AG04449 (cell line): ENCODE measurements at regions of chr16 and their contacts with region 1.

Region 1: DNA sequence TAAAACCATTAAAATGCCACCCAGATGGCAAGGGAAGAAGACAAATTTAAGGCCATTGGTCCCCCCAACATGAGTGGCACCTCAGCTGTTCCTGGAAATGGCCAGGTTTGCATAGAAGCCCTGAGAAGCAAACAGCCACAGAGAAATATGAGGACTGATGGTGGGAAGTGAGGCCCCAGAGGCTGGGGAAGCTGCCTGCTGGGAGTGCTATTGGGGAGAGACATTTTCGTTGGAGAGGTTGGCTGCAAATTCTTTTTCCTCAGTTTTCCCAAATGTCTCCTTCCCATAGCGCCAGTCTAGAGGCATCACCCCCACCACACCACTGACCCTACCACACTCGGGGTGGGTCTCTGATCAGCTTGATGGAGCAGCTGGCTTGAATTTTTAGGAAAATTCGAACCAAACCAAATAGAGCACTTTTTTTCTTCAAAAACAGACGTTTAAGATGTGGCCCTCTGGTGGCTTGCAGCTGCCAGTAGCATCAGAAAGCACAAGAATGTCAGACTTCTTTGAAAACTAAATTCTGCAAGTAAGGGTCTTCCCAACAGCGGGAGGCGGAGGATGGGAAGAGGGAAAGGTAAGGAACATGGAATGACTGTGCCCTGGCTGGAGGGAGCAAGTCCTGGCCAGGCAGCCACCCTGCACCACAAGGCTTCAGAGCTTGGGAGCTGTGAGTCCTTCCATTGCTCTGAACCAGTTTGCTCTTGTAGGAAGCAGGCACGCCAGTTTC is 13.2 kb upstream of the SLC12A3 start:
- DNase-seq: no peak
- H3K4me3 ChIP-seq: no peak overlapping the region
- CTCF ChIP-seq: peak; percentile 52

Region 2: DNA sequence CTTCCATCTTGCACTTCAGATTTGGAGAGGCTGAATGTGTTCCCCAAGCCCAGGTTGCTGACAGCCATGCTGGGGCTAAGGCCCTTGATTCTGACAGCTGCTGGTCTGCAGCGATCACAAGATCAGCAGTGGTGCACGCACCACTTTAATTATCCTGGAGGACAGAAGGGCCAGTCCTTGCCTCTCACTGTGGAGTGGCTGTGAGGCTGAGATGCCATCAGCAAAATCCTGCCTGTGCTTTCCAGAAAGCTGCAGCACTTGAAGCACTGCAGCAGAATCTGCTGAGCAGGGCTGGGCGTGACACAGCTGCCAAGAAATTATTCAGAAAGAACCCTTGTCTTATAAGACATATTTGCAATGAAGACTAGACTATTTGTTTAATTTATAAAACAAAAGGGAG is 84.8 kb before region 1 on chr16:
- CTCF ChIA-PET with region 1: no interaction called
- POLR2A ChIA-PET with region 1: no interaction called
- DNase-seq: no peak
- H3K4me3 ChIP-seq: no peak overlapping the region
- CTCF ChIP-seq: no peak

Region 3: GRCh38 chr16:56814537-56815432 is 37.1 kb before region 1 on chr16:
- CTCF ChIA-PET with region 1: interaction called, 17 read pairs
- POLR2A ChIA-PET with region 1: no interaction called
- DNase-seq: no peak
- H3K4me3 ChIP-seq: no peak overlapping the region
- CTCF ChIP-seq: no peak

Region 4: DNA sequence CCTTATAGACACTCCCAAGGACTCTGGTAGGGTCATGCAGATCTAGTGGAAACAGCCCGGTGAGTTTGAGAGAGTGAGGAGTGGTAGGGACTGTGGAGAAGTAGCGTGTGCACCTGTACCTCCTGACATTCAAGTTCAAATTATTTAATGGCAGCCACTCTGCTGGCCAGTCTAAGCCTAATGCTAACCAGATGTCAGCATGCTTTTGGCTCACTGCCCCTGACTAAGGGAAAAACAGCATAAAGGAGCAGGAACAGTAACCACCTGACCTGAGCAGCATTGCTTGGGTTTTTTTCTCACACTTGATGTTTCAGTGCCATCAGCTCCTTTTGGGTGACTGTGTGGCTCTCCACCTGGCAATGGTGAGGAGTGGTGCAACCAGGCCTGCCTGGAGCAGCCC is 10.6 kb before region 1 on chr16:
- CTCF ChIA-PET with region 1: interaction called, 21 read pairs
- POLR2A ChIA-PET with region 1: interaction called, 3 read pairs
- DNase-seq: no peak
- H3K4me3 ChIP-seq: no peak overlapping the region
- CTCF ChIP-seq: no peak

Region 5: DNA sequence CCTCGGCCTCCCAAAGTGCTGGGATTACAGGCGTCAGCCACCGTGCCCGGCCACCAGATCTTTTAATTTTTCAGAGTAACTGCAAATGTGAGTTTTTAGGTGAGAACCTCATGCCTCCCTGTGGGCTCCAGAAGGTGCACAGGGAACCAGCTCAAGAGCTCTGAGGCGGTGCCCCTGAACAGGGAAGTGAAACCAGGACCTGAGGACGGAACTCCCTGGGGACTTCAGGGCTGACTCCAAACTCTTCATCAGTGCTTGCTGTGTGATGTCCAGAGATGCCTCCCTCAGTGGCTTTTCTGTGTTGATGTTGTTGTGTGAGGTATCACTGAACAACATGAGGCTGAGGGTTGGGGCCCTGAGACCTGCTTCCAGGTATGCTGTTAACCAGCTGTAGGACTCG is 37.0 kb after region 1 on chr16:
- CTCF ChIA-PET with region 1: no interaction called
- POLR2A ChIA-PET with region 1: no interaction called
- DNase-seq: no peak
- H3K4me3 ChIP-seq: no peak overlapping the region
- CTCF ChIP-seq: no peak